Gastrocnemius medialis (tissue), 4 donors: ENCODE measurements at regions of chr12 and their contacts with region 1.

Region 1: DNA sequence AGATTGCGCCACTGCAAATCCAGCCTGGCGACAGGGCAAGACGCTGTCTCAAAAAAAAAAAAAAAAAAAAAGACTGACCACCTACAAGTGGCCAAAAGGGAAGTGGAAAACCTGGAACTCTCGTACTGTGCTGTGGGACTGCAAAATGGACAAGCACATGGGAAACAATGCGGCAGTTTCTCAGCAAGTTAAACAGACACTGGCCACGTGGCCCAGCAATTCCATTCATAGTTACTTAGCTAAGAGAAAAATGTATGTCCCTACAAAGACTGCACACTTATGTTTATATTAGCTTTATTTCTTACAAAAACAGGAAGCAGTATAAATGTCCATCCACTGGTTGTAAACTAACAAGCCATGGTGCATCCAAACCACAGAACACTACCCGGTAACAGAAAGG is 5.6 kb downstream of the CHFR start:
- DNase-seq: no peak
- ATAC-seq: no peak
- H3K4me3 ChIP-seq: no peak overlapping the region
- H3K27ac ChIP-seq: no peak overlapping the region
- H3K4me1 ChIP-seq: peaks cover 0 to 4% of the 10 kb centered on the region in 2 donors
- H3K27me3 ChIP-seq: no peaks in the 10 kb centered on the region
- CTCF ChIP-seq: no peak
- POLR2A ChIP-seq: no peak

Region 2: GRCh38 chr12:132672017-132672515 is 209.8 kb before region 1 on chr12:
- in situ Hi-C with region 1: no loop called
- intact Hi-C with region 1: no loop called
- DNase-seq: no peak
- ATAC-seq: no peak
- H3K4me3 ChIP-seq: no peak overlapping the region
- H3K27ac ChIP-seq: no peak overlapping the region
- H3K4me1 ChIP-seq: no peaks in the 10 kb centered on the region
- H3K27me3 ChIP-seq: no peaks in the 10 kb centered on the region
- CTCF ChIP-seq: no peak
- POLR2A ChIP-seq: no peak

Region 3: DNA sequence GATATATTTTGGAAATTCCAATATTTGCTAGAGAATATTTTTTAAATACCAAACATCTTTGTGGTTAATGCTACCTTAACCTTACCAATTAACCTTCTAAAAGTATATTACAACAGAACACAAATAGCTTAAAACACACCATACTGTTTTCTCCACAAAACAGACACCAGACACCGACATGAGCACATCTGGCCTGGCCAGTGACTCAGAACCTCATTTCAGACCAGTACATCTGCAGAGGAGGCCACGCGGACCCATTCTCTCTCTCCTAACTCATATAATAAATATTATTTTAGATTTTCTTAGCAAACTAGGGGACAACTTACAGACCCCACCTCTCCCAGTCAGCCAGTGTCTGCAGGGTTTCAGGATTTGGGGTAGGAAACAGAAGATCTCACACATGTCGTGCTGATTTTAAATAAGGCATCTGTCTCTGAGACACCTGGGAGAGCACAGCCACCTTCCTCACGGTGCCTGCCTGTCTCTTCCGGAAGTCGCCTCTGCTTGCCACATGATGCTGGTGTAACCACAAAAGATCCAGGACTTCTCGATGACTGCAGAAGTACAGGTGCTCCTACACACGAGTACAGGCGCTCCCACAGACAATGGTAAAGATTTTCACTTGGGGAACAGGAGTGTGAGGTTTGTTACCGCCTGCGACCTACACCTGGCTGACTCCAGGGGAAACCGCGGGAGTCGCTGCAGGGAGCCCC is 110.5 kb before region 1 on chr12:
- in situ Hi-C with region 1: no loop called
- intact Hi-C with region 1: no loop called
- DNase-seq: no peak
- ATAC-seq: no peak
- H3K4me3 ChIP-seq: no peak overlapping the region
- H3K27ac ChIP-seq: no peak overlapping the region
- H3K4me1 ChIP-seq: peaks cover 15% of the 10 kb centered on the region in 2 donors
- H3K27me3 ChIP-seq: no peaks in the 10 kb centered on the region
- CTCF ChIP-seq: no peak
- POLR2A ChIP-seq: no peak

Region 4: DNA sequence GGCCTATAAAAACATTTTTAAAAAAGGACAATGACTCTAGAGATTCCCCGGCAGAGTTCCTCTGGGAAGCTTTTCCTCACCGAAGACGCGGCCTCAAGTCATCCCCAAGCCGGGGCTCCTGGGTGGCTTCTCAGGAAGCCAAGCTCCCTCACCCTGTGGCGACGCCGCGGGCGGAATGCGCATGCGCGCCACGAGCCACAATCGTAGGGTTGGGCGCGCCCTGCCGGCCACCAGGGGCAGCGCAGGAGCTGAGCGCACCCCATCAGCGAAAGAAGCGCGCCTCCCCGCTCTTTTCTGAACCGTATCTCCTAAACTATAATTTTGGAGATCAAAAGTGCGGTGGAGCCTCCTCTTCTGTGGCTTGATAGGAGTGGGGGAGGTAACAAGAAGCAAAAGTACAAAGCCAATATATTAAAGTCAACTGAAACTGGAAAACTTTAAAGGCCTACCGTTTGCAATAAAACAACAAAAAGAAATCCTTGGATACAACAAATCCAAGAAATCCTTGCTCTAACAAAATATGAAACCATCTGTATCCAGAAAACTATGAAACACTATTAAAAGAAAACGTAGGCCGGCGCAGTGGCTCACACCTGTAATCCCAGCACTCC is 23.0 kb after region 1 on chr12:
- in situ Hi-C with region 1: no loop called
- intact Hi-C with region 1: loop called (anchors 2 kb)
- DNase-seq: peak; percentile 14 to 32
- ATAC-seq: no peak
- H3K4me3 ChIP-seq: peak overlapping the region in 2 of 4 donors; percentile 17 to 40
- H3K27ac ChIP-seq: no peak overlapping the region
- H3K4me1 ChIP-seq: no peaks in the 10 kb centered on the region
- H3K27me3 ChIP-seq: peaks cover 0 to 18% (median 7%) of the 10 kb centered on the region in 3 donors
- CTCF ChIP-seq: peak; percentile 15 to 70 (median 59)
- POLR2A ChIP-seq: no peak

Region 5: DNA sequence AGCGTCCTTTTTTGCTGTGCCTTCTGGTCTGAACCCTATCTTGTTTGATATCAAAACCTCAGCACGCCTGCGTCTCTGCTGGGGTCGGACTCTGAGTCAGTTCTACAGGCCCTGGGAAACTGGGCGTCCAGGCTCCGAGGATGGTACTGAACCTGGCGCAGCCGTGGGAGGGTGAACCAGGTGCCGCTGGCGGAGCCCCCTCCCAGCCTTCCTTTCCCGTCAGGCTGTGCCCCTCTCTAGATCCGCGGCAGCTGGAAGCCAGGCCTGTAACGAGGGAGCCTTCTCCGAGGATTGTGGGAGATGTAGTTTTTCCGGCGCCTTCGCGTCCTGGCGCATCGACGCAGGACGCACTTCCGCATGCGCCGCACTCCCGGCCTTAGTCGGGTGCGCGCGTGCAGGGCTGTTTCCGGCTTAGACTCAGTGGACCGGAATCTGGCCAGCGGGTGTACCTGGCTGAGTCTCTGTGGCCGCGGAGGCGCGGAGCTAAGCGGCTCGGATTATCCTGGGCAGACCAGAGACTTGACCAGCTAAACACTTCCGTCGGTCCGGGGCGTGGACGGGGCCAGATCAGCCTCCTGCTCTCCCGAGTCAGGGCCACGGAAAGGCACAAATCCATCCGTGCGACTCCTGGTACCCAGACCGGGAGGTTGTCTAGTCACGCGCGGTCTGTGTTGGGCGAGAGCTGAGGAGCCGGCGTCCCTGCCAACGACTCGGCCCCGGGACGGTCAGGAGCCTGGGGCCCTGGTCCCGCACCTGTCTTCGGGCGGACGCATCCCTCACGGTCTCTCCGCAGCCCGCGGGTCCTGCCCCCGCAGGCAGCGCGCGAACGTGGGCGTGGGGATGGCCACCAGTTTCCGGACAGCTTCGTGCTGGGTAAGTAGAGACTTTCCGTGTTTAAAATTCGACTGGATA is 104.4 kb after region 1 on chr12 and contains the start of gene ZNF26:
- in situ Hi-C with region 1: no loop called
- intact Hi-C with region 1: no loop called
- DNase-seq: peak; percentile 81 to 86
- ATAC-seq: peak; percentile 99 to 100
- H3K4me3 ChIP-seq: peak within 1 kb of the TSS; percentile 77 to 98 (median 88)
- H3K27ac ChIP-seq: peak within 1 kb of the TSS; percentile 86 to 88 (median 87)
- H3K4me1 ChIP-seq: peaks cover 12 to 13% of the 10 kb centered on the region in 2 donors
- H3K27me3 ChIP-seq: no peaks in the 10 kb centered on the region
- CTCF ChIP-seq: no peak
- POLR2A ChIP-seq: peak; percentile 30 to 50
- total RNA-seq, gene ZNF26: 1.2 to 12.3 (median 2.6) TPM